Posterior vena cava (tissue), 2 donors: ENCODE measurements at regions of chr1 and their contacts with region 1.

Region 1: GRCh38 chr1:243388276-243388675 is 132.4 kb downstream of the SDCCAG8 start:
- DNase-seq: no peak

Region 2: DNA sequence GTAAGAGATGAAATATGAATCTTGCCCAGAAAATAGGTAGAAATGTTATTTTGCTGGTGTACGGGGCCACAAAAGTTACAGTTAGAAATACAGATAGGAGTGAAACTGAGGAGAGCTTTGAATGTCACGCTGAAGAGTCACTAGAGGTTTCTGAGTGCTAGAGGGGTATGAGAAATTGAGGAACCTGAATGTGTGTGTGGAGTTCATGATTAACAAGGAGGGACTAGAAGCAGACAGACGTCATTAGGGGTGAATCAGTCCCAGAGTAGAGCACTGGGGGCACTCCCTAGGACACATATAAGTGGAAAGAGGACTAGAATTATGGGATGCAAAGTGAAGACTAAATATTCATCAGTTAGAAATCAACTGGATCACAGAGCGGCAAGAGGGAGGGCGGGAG is 1200.5 kb before region 1 on chr1:
- intact Hi-C with region 1: loop called in 1 of 2 experiments (anchors 5 kb)
- DNase-seq: no peak

Region 3: GRCh38 chr1:243316366-243316989 is 71.8 kb before region 1 on chr1:
- intact Hi-C with region 1: no loop called
- DNase-seq: no peak

Region 4: GRCh38 chr1:243364866-243365265 is 23.4 kb before region 1 on chr1:
- intact Hi-C with region 1: no loop called
- DNase-seq: no peak